HEK293 (cell line): ENCODE measurements at regions of chr2 and their contacts with region 1.

Region 1: GRCh38 chr2:72887754-72888437 is 688 bp downstream of the SPR start:
- H3K4me3 ChIP-seq: peak overlapping the region; percentile 55
- H3K27ac ChIP-seq: peak overlapping the region; percentile 78
- H3K4me1 ChIP-seq: no peaks in the 10 kb centered on the region
- CTCF ChIP-seq: peak; percentile 85

Region 2: DNA sequence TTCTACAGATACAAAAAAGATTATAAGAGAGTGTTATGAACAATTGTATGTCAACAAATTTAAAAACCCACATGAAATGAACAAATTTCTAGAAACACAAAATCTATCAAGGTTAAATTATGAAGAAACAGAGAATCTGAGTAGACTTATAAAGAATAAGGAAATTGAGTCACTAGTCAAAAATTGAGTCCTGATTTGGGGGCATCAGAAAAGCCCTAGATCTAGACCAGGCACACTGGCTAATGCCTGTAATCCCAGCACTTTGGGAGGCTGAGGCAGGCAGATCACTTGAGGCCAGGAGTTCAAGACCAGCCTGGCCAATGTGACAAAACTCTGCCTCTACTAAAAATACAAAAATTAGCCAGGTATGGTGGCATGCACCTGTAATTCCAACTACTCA is 16.0 kb before region 1 on chr2:
- CTCF ChIA-PET with region 1: interaction called, 16 read pairs
- POLR2A ChIA-PET with region 1: no interaction called
- H3K4me3 ChIP-seq: no peak overlapping the region
- H3K27ac ChIP-seq: no peak overlapping the region
- H3K4me1 ChIP-seq: no peaks in the 10 kb centered on the region
- CTCF ChIP-seq: no peak

Region 3: DNA sequence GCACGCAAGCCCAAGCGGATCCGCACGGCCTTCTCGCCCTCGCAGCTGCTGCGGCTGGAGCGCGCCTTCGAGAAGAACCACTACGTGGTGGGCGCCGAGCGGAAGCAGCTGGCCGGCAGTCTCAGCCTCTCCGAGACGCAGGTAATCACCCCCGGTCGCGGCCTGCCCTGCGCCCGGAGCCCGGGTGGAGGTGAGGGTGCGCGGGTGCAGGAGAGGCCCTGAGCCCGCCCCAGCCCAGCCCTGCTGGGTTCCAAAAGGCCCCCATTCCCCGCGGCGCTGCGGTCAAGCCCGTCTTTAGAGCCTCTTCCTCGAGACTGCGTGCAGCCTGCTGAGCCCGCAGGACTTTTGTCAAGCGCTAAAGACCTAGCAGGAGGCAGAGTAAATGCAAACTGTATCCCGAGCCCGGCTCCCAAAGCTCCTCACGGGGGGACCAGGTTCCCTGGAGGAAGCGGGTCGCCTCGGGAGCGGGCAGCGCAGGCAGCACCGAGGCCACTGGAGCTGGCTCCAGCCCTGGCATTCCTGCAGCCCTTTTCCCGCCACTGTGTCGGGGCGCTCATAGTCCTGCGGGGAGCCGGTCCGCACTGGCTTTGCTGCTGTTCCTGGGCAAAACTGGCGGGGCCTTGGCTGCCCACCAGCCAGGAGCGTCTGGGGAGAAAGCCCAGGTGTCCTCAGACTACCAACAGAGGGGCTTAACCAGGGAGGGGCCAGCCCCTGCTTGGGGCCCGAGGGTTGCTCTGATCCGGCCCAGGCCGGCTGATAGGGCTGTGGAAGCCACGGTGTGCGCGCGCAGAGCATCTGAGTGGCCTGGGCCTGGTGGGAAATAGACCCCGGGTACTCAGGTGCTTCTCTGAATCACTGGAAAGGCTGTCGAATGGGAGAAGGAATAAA is 36.7 kb after region 1 on chr2:
- CTCF ChIA-PET with region 1: interaction called, 17 read pairs
- POLR2A ChIA-PET with region 1: no interaction called
- H3K4me3 ChIP-seq: no peak overlapping the region
- H3K27ac ChIP-seq: no peak overlapping the region
- H3K4me1 ChIP-seq: no peaks in the 10 kb centered on the region
- CTCF ChIP-seq: no peak

Region 4: DNA sequence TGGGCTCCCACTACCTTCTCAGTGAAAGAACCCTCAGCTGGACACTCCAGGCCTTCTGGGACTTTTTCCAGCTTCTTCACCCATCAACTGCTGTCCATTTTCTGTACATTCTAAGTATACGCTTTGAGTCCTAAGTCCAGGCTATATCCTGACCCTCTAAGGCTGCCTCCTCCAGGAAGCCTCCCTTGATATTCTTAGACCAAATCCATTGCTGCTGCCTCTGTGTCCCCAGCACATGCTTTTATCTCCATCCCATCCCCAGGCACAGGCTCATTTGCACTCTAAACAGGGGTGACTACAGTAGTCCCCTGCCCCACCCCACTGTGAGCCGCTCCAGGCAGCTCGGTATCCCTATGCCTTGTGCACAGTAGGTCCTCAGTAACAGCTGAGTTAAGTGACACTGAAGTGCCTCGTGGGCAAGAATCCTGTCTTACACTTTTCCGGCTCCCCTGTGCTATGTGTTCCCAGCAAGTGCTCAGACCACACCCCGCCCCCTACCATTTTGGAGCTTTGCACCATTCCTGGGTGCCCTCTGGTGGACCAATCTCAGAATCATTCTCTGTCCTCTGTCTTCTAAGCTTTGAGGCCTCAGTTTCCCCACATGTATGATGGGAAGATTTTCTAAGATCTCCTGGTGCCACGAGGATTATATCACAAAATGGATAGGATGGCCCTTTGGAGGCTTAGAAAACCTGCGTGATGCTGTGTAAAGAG is 64.4 kb after region 1 on chr2:
- CTCF ChIA-PET with region 1: interaction called, 21 read pairs
- POLR2A ChIA-PET with region 1: no interaction called
- H3K4me3 ChIP-seq: no peak overlapping the region
- H3K27ac ChIP-seq: no peak overlapping the region
- H3K4me1 ChIP-seq: no peaks in the 10 kb centered on the region
- CTCF ChIP-seq: no peak

Region 5: DNA sequence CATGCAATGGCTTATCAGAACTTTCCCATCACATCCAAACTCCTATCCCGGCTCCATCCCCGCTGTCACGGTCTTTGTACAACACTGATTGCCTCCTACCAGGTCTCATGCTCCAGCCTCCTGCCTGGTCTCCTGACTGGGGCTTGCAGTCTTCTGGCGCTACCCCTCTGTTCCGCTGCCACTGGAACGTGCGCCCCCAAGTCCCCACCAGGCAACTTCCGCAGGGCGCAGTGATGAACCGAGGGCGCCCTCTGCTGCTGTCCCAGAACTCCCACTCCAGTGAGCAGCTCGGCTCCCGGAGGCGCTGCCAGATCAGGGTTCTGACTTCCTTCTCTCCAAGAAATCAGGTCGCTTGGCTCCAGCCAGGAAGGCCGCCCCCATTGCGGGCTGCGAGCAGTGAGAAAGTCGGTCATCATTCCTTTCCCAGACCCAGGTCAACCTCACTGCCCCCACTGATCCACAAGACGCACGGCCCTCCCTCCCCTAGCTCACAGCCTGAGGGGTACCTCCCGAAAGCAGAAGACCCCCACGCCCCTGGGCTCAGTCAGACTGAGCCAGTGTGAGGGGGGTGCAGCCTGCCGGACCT is 268.7 kb after region 1 on chr2:
- CTCF ChIA-PET with region 1: interaction called, 68 read pairs
- POLR2A ChIA-PET with region 1: no interaction called
- H3K4me3 ChIP-seq: no peak overlapping the region
- H3K27ac ChIP-seq: no peak overlapping the region
- H3K4me1 ChIP-seq: no peaks in the 10 kb centered on the region
- CTCF ChIP-seq: peak; percentile 97

Region 6: GRCh38 chr2:73212448-73213176 is 324.7 kb after region 1 on chr2:
- CTCF ChIA-PET with region 1: interaction called, 37 read pairs
- POLR2A ChIA-PET with region 1: no interaction called
- H3K4me3 ChIP-seq: no peak overlapping the region
- H3K27ac ChIP-seq: no peak overlapping the region
- H3K4me1 ChIP-seq: no peaks in the 10 kb centered on the region
- CTCF ChIP-seq: peak; percentile 67